A673 (cell line): ENCODE measurements at regions of chr6 and their contacts with region 1.

Region 1: DNA sequence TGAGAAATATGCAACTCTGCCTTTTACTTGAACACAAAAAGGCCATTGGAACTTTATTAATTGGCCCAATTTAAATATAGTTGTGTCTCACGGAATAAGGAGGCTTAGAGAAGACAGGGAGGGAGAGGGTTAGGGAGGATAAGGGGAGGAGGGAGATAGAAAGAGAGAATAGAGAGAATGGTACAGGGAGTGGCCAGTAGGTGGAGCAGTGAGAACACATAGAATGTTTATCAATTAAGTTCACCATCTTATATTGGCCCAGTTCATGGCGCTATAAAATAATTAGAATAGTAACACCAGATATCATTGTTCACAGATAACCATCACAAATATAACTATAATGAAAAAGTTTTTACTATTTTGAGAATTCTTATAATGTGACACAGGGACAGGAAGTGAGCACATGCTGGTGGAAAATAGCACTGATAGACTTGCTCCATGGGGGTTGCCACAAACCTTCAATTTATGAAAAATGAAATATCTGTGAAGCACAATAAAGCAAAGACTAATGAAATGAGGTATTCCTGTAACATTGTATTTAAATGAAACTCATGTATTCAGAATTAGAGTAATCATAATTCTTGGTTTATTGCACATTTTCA is 374.1 kb upstream of the MANEA start:
- DNase-seq: peak; percentile 72
- H3K4me3 ChIP-seq: no peak overlapping the region
- H3K27ac ChIP-seq: no peak overlapping the region
- H3K4me1 ChIP-seq: peaks cover 4% of the 10 kb centered on the region
- H3K27me3 ChIP-seq: no peaks in the 10 kb centered on the region
- CTCF ChIP-seq: peak; percentile 85

Region 2: GRCh38 chr6:95227351-95227750 is 24.1 kb after region 1 on chr6:
- CTCF ChIA-PET with region 1: no interaction called
- POLR2A ChIA-PET with region 1: interaction called, 21 read pairs
- intact Hi-C with region 1: no loop called
- DNase-seq: peak; percentile 23
- H3K4me3 ChIP-seq: no peak overlapping the region
- H3K27ac ChIP-seq: no peak overlapping the region
- H3K4me1 ChIP-seq: peaks cover 37% of the 10 kb centered on the region
- H3K27me3 ChIP-seq: no peaks in the 10 kb centered on the region
- CTCF ChIP-seq: no peak

Region 3: GRCh38 chr6:95280690-95281273 is 77.5 kb after region 1 on chr6:
- CTCF ChIA-PET with region 1: interaction called, 3 read pairs
- POLR2A ChIA-PET with region 1: no interaction called
- intact Hi-C with region 1: loop called (anchors 1 kb)
- DNase-seq: peak; percentile 60
- H3K4me3 ChIP-seq: no peak overlapping the region
- H3K27ac ChIP-seq: no peak overlapping the region
- H3K4me1 ChIP-seq: no peaks in the 10 kb centered on the region
- H3K27me3 ChIP-seq: no peaks in the 10 kb centered on the region
- CTCF ChIP-seq: peak; percentile 63

Region 4: DNA sequence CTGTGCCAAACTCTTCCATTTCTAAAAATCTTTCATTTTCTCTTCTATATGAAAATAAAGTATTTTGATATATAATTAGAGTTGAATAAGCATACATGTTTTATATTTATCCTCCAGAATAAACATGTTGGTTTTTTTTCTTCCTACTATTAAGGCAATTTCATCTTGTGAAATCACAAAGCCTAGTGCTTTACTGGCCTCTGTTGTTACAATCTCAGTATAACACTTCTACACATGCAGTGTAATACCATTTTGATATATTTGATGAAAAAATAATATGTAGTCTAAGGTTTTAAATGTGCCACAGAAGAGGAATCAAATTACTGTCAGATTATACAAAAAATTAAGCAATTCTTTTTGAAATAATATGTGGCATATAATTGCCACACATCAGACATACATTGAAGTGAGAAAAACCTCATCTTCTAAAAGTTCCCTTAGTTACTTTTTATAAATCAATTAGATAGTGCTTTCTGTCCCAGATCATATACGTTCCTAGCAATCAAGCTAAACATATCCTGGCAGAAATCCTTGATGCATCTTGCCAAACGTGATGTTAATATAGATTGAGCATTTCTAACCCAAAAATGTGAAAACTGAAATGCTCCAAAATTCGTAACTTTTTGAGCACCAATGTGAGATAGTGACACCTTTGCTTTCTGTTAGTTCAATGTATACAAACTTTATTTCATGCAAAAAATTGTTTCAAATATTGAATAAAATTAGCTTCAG is 149.0 kb after region 1 on chr6:
- CTCF ChIA-PET with region 1: no interaction called
- POLR2A ChIA-PET with region 1: no interaction called
- intact Hi-C with region 1: loop called (anchors 5 kb)
- DNase-seq: peak; percentile 8
- H3K4me3 ChIP-seq: no peak overlapping the region
- H3K27ac ChIP-seq: no peak overlapping the region
- H3K4me1 ChIP-seq: no peaks in the 10 kb centered on the region
- H3K27me3 ChIP-seq: no peaks in the 10 kb centered on the region
- CTCF ChIP-seq: peak; percentile 48; the same call in 1 of the 2 replicates

Region 5: GRCh38 chr6:96812077-96812703 is 1608.9 kb after region 1 on chr6:
- CTCF ChIA-PET with region 1: interaction called, 11 read pairs
- POLR2A ChIA-PET with region 1: no interaction called
- intact Hi-C with region 1: no loop called
- DNase-seq: no peak
- H3K4me3 ChIP-seq: no peak overlapping the region
- H3K27ac ChIP-seq: no peak overlapping the region
- H3K4me1 ChIP-seq: no peaks in the 10 kb centered on the region
- H3K27me3 ChIP-seq: no peaks in the 10 kb centered on the region
- CTCF ChIP-seq: no peak